Activated CD8-positive, alpha-beta memory T cell treated with anti-CD3 and anti-CD28 coated beads, Interleukin-2, amount 10 ng/mL, durations not matched to agents 7 days and 5 days (primary cell): ENCODE measurements at regions of chr6 and their contacts with region 1.

Region 1: GRCh38 chr6:152642989-152643388 is 5.8 kb upstream of the SYNE1 start:
- DNase-seq: peak; percentile 59
- ATAC-seq: peak; percentile 70
- H3K4me3 Mint-ChIP-seq: no peak overlapping the region
- H3K27ac Mint-ChIP-seq: no peak overlapping the region
- H3K4me1 Mint-ChIP-seq: no peaks in the 10 kb centered on the region
- H3K27me3 Mint-ChIP-seq: peaks cover 25% of the 10 kb centered on the region

Region 2: DNA sequence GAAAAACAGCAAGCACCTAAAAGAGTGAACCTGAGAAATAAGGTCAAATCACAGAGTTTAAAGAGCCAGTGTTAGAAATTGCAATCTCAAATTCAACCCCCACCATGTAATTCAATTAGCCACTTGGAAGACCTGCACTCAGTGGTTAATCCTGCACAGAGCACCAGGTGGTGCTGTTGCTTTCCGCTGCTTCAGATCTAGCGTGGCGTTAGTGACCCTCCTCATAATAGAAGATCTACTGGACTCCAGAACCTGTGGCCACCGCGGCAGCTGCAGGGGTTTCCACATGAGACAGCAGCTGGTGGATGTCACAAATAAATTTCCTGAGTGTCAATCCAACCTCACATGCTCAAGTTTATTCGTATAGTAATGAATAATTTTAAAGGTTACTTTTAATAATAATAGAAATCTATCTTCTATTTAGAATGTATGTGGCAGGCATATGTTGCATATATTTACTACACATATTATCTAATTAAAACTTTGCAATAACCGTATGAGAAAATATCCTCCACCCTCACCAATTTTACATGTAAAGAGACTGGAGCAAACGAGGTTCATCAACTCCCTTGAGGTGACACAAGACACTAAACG is 90.3 kb before region 1 on chr6:
- CTCF ChIA-PET with region 1: interaction called, 14 read pairs
- DNase-seq: peak; percentile 50
- ATAC-seq: peak; percentile 81
- H3K4me3 Mint-ChIP-seq: no peak overlapping the region
- H3K27ac Mint-ChIP-seq: no peak overlapping the region
- H3K4me1 Mint-ChIP-seq: no peaks in the 10 kb centered on the region
- H3K27me3 Mint-ChIP-seq: no peaks in the 10 kb centered on the region